Heart left ventricle (tissue), 16 donors: ENCODE measurements at regions of chr7 and their contacts with region 1.

Region 1: DNA sequence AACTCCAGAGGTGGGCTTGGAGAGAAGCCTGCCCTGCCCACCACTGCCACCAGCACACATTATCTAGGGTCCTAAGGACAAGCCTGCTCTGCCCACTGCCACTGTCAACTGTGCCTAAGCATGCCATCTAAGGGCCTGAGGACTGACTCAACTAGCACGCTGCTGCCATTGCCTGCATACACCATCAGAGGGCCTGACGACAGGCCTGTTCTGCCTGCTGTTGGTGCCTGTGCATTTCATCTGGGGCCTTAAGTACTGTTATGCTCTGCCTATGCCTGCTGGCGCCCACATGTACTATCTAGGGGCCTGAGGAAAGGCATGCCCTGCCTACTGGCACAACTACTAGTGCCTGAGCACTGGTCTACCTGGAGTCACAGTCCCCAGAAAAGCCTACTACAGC is 27.1 kb upstream of the LRRD1 start:
- DNase-seq: no peak
- ATAC-seq: no peak
- H3K4me3 ChIP-seq: no peak overlapping the region
- H3K27ac ChIP-seq: no peak overlapping the region
- H3K4me1 ChIP-seq: no peaks in the 10 kb centered on the region
- H3K27me3 ChIP-seq: no peaks in the 10 kb centered on the region
- CTCF ChIP-seq: no peak
- POLR2A ChIP-seq: no peak

Region 2: GRCh38 chr7:92095380-92095779 is 110.6 kb before region 1 on chr7:
- intact Hi-C with region 1: loop called in 2 of 10 experiments (anchors 5 to 10 kb)
- DNase-seq: no peak
- ATAC-seq: peak in 1 of 4 donors; percentile 55
- H3K4me3 ChIP-seq: no peak overlapping the region
- H3K27ac ChIP-seq: no peak overlapping the region
- H3K4me1 ChIP-seq: peaks cover 0 to 4% (median 0%) of the 10 kb centered on the region in 12 donors
- H3K27me3 ChIP-seq: no peaks in the 10 kb centered on the region
- CTCF ChIP-seq: no peak
- POLR2A ChIP-seq: no peak